B cell (primary cell): ENCODE measurements at regions of chr19 and their contacts with region 1.

Region 1: GRCh38 chr19:17522988-17523872 is 11.8 kb downstream of the PGLS start:
- DNase-seq: peak; percentile 92
- ATAC-seq: peak; percentile 71
- H3K4me3 ChIP-seq: peak overlapping the region in 4 of 5 experiments; percentile 28 to 40 (median 34)
- H3K4me3 Mint-ChIP-seq: peak overlapping the region; percentile 80
- H3K27ac ChIP-seq: peak overlapping the region; percentile 75 to 88
- H3K27ac Mint-ChIP-seq: peak overlapping the region; percentile 97
- H3K4me1 ChIP-seq: peaks cover 51 to 56% of the 10 kb centered on the region in 2 donors
- H3K4me1 Mint-ChIP-seq: peaks cover 57% of the 10 kb centered on the region
- H3K27me3 ChIP-seq: no peaks in the 10 kb centered on the region
- H3K27me3 Mint-ChIP-seq: no peaks in the 10 kb centered on the region
- CTCF ChIP-seq: no peak

Region 2: GRCh38 chr19:17475541-17476115 is 47.6 kb before region 1 on chr19:
- CTCF ChIA-PET with region 1: no interaction called
- POLR2A ChIA-PET with region 1: no interaction called
- intact Hi-C with region 1: no loop called
- DNase-seq: no peak
- ATAC-seq: no peak
- H3K4me3 ChIP-seq: no peak overlapping the region
- H3K4me3 Mint-ChIP-seq: no peak overlapping the region
- H3K27ac ChIP-seq: no peak overlapping the region
- H3K27ac Mint-ChIP-seq: no peak overlapping the region
- H3K4me1 ChIP-seq: peaks cover 6 to 7% of the 10 kb centered on the region in 2 donors
- H3K4me1 Mint-ChIP-seq: peaks cover 8% of the 10 kb centered on the region
- H3K27me3 ChIP-seq: no peaks in the 10 kb centered on the region
- H3K27me3 Mint-ChIP-seq: no peaks in the 10 kb centered on the region
- CTCF ChIP-seq: no peak

Region 3: GRCh38 chr19:17496337-17496997 is 26.8 kb before region 1 on chr19:
- CTCF ChIA-PET with region 1: interaction called, 17 read pairs
- POLR2A ChIA-PET with region 1: interaction called, 5 read pairs
- intact Hi-C with region 1: loop called (anchors 1 kb)
- DNase-seq: peak; percentile 88
- ATAC-seq: peak; percentile 99
- H3K4me3 ChIP-seq: no peak overlapping the region
- H3K4me3 Mint-ChIP-seq: peak overlapping the region; percentile 16
- H3K27ac ChIP-seq: no peak overlapping the region
- H3K27ac Mint-ChIP-seq: no peak overlapping the region
- H3K4me1 ChIP-seq: peaks cover 7 to 21% of the 10 kb centered on the region in 2 donors
- H3K4me1 Mint-ChIP-seq: peaks cover 25% of the 10 kb centered on the region
- H3K27me3 ChIP-seq: no peaks in the 10 kb centered on the region
- H3K27me3 Mint-ChIP-seq: no peaks in the 10 kb centered on the region
- CTCF ChIP-seq: peak; percentile 97

Region 4: DNA sequence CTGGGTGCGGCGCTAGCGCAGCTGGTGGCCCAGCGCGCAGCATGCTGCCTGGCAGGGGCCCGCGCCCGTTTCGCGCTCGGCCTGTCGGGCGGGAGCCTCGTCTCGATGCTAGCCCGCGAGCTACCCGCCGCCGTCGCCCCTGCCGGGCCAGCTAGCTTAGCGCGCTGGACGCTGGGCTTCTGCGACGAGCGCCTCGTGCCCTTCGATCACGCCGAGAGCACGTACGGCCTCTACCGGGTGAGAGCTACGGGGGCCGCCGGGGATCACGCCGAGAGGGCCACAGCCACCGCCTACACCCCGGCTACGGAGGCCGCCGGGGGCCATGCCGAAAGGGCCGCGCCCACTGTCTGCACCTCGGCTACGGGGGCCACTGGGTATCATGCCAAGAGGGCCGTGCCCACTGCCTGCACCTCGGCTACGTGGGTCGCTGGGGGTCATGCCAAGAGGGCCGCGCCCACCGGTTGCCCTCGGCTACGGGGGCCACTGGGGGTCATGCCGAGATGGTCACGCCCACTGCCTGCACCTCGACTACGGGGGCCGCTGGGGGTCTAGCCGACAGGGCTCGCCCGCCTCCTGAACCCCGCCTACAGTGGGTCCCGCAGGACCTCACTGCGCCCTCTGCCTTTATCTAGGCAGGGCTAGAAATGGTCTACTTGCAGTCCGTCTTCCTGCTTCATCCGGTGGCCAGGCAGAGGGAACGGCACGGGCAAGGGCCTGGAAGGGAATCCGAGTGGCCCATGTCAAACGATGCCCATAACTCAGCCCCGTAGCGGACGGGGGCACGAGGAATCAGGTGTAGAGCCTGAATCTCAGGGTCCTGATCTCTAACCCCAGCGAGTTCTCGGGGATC is 11.3 kb before region 1 on chr19:
- CTCF ChIA-PET with region 1: interaction called, 40 read pairs
- POLR2A ChIA-PET with region 1: interaction called, 45 read pairs
- intact Hi-C with region 1: loop called (anchors 1 kb)
- DNase-seq: peak; percentile 96
- ATAC-seq: peak; percentile 84
- H3K4me3 ChIP-seq: peak overlapping the region; percentile 68 to 98 (median 85)
- H3K4me3 Mint-ChIP-seq: peak overlapping the region; percentile 96
- H3K27ac ChIP-seq: peak overlapping the region; percentile 82 to 94
- H3K27ac Mint-ChIP-seq: peak overlapping the region; percentile 95
- H3K4me1 ChIP-seq: peaks cover 18 to 24% of the 10 kb centered on the region in 2 donors
- H3K4me1 Mint-ChIP-seq: peaks cover 40% of the 10 kb centered on the region
- H3K27me3 ChIP-seq: no peaks in the 10 kb centered on the region
- H3K27me3 Mint-ChIP-seq: no peaks in the 10 kb centered on the region
- CTCF ChIP-seq: peak; percentile 38

Region 5: DNA sequence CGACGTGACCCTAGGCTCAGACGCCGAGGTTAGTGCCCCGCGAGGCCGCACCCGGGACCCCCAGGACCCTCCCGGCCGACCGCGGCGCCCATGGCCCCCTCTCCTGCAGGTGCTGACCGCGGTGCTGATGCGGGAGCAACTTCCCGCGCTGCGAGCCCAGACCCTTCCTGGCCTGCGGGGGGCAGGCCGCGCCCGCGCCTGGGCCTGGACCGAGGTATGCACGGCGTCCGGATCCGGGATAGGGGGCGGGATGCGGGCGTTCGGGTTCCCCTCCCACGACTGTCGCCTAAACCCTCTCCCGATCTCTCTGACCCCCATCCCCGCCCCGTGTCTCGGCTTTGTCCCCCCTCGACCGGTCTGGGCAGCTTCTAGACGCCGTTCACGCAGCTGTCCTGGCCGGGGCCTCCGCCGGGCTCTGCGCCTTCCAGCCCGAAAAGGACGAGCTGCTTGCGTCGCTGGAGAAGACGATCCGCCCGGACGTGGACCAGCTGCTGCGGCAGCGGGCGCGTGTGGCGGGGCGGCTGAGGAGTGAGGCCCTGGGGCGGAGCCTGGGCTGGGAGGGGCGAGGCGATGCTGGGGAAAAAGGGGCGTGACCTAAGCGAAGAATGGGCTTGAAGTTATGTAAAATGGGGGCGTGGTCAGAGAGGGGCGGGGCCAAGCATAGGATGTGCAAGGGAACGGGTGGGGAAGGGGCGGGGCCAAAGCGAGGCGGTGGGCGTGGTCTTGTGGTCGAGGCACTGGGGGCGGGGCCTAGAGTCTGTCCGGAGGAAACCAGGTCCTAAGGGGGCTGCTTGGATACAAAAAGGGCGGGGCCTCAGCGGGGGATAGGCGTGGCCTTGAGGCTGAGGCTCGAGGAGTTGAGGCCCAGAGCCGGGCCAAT is 16.2 kb after region 1 on chr19:
- CTCF ChIA-PET with region 1: interaction called, 13 read pairs
- POLR2A ChIA-PET with region 1: interaction called, 29 read pairs
- intact Hi-C with region 1: loop called (anchors 1 kb)
- DNase-seq: peak; percentile 99
- ATAC-seq: peak; percentile 92
- H3K4me3 ChIP-seq: peak overlapping the region in 4 of 5 experiments; percentile 14 to 53 (median 40)
- H3K4me3 Mint-ChIP-seq: peak overlapping the region; percentile 93
- H3K27ac ChIP-seq: peak overlapping the region; percentile 54 to 59
- H3K27ac Mint-ChIP-seq: peak overlapping the region; percentile 97
- H3K4me1 ChIP-seq: peaks cover 26 to 46% of the 10 kb centered on the region in 2 donors
- H3K4me1 Mint-ChIP-seq: peaks cover 54% of the 10 kb centered on the region
- H3K27me3 ChIP-seq: no peaks in the 10 kb centered on the region
- H3K27me3 Mint-ChIP-seq: no peaks in the 10 kb centered on the region
- CTCF ChIP-seq: no peak

Region 6: DNA sequence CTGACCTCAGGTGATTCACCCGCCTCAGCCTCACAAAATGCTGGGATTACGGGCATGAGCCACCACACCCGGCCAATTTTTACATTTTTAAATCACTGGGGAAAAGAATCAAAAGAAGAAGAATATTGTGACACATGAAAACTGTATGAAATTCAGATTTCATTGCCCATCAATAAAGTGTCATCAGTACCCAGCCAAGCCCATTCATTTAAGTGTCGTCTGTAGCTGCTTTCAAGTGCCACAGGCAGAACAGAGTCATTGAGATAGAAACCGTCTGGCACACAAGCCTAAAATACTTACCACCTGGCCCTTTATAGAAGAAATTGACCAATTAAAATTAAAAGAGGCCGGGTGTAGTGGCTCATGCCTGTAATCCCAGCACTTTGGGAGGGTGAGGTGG is 47.6 kb after region 1 on chr19:
- CTCF ChIA-PET with region 1: interaction called, 11 read pairs
- POLR2A ChIA-PET with region 1: interaction called, 4 read pairs
- intact Hi-C with region 1: no loop called
- DNase-seq: no peak
- ATAC-seq: no peak
- H3K4me3 ChIP-seq: no peak overlapping the region
- H3K4me3 Mint-ChIP-seq: no peak overlapping the region
- H3K27ac ChIP-seq: no peak overlapping the region
- H3K27ac Mint-ChIP-seq: no peak overlapping the region
- H3K4me1 ChIP-seq: no peaks in the 10 kb centered on the region
- H3K4me1 Mint-ChIP-seq: peaks cover 3% of the 10 kb centered on the region
- H3K27me3 ChIP-seq: no peaks in the 10 kb centered on the region
- H3K27me3 Mint-ChIP-seq: no peaks in the 10 kb centered on the region
- CTCF ChIP-seq: no peak